MCF 10A (cell line): ENCODE measurements at regions of chr13 and their contacts with region 1.

Region 1: GRCh38 chr13:40271931-40272775 is 394.3 kb downstream of the FOXO1 start:
- DNase-seq: peak; percentile 87
- H3K4me3 Mint-ChIP-seq: peak overlapping the region; percentile 15
- H3K27ac Mint-ChIP-seq: peak overlapping the region; percentile 32
- H3K4me1 Mint-ChIP-seq: peaks cover 39% of the 10 kb centered on the region
- H3K27me3 Mint-ChIP-seq: no peaks in the 10 kb centered on the region
- CTCF ChIP-seq: no peak

Region 2: DNA sequence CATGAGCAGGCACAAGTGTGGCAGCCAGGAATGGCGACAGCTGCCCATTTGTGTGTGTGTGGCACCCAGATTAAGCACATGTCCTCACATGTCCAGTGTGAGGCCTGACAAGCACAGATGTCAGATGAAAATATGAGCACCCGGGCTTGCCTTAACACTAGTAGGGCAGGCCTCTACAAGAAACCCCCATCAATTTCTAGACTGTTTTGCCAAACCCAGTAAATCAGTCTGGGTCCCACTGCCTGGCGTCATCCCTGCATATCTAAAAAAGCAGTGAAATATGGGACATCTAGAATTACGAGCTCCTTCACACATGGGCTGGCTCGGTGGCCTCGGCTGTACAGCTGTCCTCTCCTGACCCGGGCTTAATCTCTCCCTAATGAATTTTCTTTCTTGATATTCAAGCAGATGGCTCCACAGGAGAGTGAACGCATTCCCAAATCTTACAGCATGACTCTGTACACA is 38.4 kb before region 1 on chr13:
- CTCF ChIA-PET with region 1: interaction called, 5 read pairs
- POLR2A ChIA-PET with region 1: interaction called, 15 read pairs
- intact Hi-C with region 1: no loop called
- DNase-seq: peak; percentile 24
- H3K4me3 Mint-ChIP-seq: no peak overlapping the region
- H3K27ac Mint-ChIP-seq: no peak overlapping the region
- H3K4me1 Mint-ChIP-seq: peaks cover 66% of the 10 kb centered on the region
- H3K27me3 Mint-ChIP-seq: no peaks in the 10 kb centered on the region
- CTCF ChIP-seq: no peak

Region 3: DNA sequence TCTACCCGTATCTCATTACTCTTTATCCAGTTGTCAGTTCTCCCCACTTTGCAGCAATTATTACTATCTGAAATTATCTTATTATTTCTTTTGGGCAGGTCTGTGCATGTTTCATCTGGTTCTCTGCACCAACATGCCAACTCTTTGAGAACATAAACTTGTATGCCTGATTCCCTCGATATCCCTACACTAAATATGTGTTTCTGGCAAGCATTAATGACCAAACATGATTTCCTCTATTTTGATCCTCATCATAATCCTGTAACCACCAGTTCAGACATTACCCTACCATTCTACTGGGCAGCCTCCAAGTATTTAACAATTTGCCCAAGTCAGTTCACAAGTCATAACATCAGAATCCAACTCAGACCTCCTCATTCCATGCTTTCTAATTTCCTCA is 31.9 kb before region 1 on chr13:
- CTCF ChIA-PET with region 1: interaction called, 5 read pairs
- POLR2A ChIA-PET with region 1: interaction called, 16 read pairs
- intact Hi-C with region 1: no loop called
- DNase-seq: no peak
- H3K4me3 Mint-ChIP-seq: no peak overlapping the region
- H3K27ac Mint-ChIP-seq: no peak overlapping the region
- H3K4me1 Mint-ChIP-seq: peaks cover 30% of the 10 kb centered on the region
- H3K27me3 Mint-ChIP-seq: no peaks in the 10 kb centered on the region
- CTCF ChIP-seq: no peak

Region 4: DNA sequence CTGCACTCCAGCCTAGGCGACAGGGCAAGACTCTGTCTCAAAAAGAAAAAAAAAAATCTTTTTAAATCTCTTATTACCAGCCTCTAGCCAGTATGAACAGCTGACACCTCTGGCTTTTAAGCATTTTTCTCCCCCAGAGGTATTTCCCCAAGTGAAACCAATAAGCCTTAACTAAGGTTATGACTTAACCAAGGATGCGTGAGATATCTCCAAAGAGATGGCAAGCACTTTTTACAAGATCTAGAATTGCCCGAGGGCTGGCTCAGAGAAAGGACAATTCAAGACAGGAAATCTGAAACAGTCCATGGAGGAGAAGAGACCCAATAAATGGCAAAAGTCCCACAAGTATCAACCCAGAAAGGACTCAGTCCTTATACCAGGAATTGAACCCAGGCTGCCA is 32.2 kb after region 1 on chr13:
- CTCF ChIA-PET with region 1: no interaction called
- POLR2A ChIA-PET with region 1: no interaction called
- intact Hi-C with region 1: no loop called
- DNase-seq: no peak
- H3K4me3 Mint-ChIP-seq: no peak overlapping the region
- H3K27ac Mint-ChIP-seq: no peak overlapping the region
- H3K4me1 Mint-ChIP-seq: no peaks in the 10 kb centered on the region
- H3K27me3 Mint-ChIP-seq: no peaks in the 10 kb centered on the region
- CTCF ChIP-seq: no peak

Region 5: DNA sequence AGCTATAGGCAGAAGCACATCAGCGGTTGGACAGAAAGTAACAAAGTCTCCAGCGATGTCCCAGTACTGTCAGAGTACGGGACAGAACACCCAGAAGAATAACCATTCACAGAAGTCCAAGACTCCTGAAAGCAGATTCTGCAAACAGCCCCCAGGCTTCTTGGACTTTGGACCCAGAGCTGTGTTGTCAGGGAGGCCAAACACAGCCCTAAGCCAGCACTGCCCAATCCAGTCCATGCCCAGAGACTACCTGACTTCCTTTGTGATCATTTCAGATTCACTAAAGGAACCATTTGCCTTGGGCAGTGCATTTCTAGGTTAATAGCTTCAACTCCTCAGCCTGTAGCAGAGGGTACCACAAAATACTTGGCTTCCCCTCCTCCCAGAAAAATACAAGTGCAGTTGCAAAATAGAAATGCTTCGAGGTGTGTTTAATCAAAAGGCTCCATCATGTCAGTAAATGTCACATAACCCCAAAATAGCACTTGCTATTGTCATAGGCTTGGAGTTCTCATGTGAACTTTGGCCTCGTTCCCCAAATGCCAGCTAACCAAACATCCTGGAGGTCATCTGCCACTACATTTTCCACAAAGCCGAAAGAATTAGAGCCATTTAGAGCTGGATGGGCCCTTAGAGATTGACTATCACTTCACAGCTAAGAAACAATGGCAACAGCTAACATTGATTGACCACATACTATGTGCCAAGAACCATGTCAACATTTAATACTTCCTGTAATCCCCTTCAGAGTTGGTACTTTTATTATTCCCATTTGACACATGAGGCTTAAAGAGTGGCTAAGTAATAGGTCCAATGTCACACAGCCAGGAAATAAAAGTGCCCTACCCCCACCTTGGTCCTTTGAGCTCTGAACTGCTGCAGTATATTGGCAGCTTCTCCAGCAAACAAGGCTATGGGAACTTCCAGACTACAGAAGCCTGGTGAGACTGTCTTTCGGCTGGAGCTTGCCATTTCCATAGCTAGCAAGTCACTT is 64.4 kb after region 1 on chr13:
- CTCF ChIA-PET with region 1: no interaction called
- POLR2A ChIA-PET with region 1: interaction called, 13 read pairs
- intact Hi-C with region 1: no loop called
- DNase-seq: no peak
- H3K4me3 Mint-ChIP-seq: no peak overlapping the region
- H3K27ac Mint-ChIP-seq: no peak overlapping the region
- H3K4me1 Mint-ChIP-seq: peaks cover 44% of the 10 kb centered on the region
- H3K27me3 Mint-ChIP-seq: no peaks in the 10 kb centered on the region
- CTCF ChIP-seq: no peak

Region 6: GRCh38 chr13:41603917-41604316 is 1331.8 kb after region 1 on chr13:
- CTCF ChIA-PET with region 1: no interaction called
- POLR2A ChIA-PET with region 1: no interaction called
- intact Hi-C with region 1: no loop called
- DNase-seq: peak; percentile 96
- H3K4me3 Mint-ChIP-seq: no peak overlapping the region
- H3K27ac Mint-ChIP-seq: peak overlapping the region; percentile 44
- H3K4me1 Mint-ChIP-seq: peaks cover 19% of the 10 kb centered on the region
- H3K27me3 Mint-ChIP-seq: no peaks in the 10 kb centered on the region
- CTCF ChIP-seq: no peak